PC-9 (cell line): ENCODE measurements at regions of chr1 and their contacts with region 1.

Region 1: GRCh38 chr1:55727010-55727409 is 511.8 kb upstream of the USP24 start:
- DNase-seq: peak; percentile 77 to 89
- H3K4me3 ChIP-seq: no peak overlapping the region
- H3K27ac ChIP-seq: peak overlapping the region; percentile 70
- H3K4me1 ChIP-seq: peaks cover 37% of the 10 kb centered on the region
- H3K27me3 ChIP-seq: no peaks in the 10 kb centered on the region
- CTCF ChIP-seq: no peak

Region 2: GRCh38 chr1:55645270-55645669 is 81.7 kb before region 1 on chr1:
- CTCF ChIA-PET with region 1: no interaction called
- POLR2A ChIA-PET with region 1: interaction called, 10 read pairs
- intact Hi-C with region 1: no loop called
- DNase-seq: no peak
- H3K4me3 ChIP-seq: no peak overlapping the region
- H3K27ac ChIP-seq: no peak overlapping the region
- H3K4me1 ChIP-seq: no peaks in the 10 kb centered on the region
- H3K27me3 ChIP-seq: no peaks in the 10 kb centered on the region
- CTCF ChIP-seq: no peak

Region 3: DNA sequence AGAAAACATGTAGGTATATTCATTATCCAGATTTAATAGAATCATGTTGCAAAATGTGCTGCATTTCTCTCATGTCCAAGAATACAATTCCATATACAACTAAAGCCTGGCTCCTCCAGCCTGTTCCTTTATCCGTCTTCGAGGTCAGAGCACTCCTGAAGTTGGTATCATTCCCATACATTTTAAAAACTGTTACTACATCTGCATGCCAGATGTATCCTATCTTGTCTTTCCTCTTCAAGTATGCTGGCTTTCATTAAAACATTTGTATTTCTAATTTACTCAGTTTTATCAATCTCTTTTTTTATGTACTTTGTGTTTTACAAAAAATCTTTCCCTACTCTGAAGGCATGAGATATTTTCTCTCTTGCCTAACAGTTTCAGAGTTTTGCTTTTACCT is 24.8 kb after region 1 on chr1:
- CTCF ChIA-PET with region 1: no interaction called
- POLR2A ChIA-PET with region 1: no interaction called
- intact Hi-C with region 1: no loop called
- DNase-seq: no peak
- H3K4me3 ChIP-seq: no peak overlapping the region
- H3K27ac ChIP-seq: no peak overlapping the region
- H3K4me1 ChIP-seq: no peaks in the 10 kb centered on the region
- H3K27me3 ChIP-seq: no peaks in the 10 kb centered on the region
- CTCF ChIP-seq: no peak

Region 4: GRCh38 chr1:55781944-55782482 is 55.0 kb after region 1 on chr1:
- CTCF ChIA-PET with region 1: no interaction called
- POLR2A ChIA-PET with region 1: no interaction called
- intact Hi-C with region 1: loop called (anchors 2 kb)
- DNase-seq: peak in 1 of 2 experiments; percentile 77
- H3K4me3 ChIP-seq: no peak overlapping the region
- H3K27ac ChIP-seq: no peak overlapping the region
- H3K4me1 ChIP-seq: peaks cover 47% of the 10 kb centered on the region
- H3K27me3 ChIP-seq: no peaks in the 10 kb centered on the region
- CTCF ChIP-seq: no peak

Region 5: DNA sequence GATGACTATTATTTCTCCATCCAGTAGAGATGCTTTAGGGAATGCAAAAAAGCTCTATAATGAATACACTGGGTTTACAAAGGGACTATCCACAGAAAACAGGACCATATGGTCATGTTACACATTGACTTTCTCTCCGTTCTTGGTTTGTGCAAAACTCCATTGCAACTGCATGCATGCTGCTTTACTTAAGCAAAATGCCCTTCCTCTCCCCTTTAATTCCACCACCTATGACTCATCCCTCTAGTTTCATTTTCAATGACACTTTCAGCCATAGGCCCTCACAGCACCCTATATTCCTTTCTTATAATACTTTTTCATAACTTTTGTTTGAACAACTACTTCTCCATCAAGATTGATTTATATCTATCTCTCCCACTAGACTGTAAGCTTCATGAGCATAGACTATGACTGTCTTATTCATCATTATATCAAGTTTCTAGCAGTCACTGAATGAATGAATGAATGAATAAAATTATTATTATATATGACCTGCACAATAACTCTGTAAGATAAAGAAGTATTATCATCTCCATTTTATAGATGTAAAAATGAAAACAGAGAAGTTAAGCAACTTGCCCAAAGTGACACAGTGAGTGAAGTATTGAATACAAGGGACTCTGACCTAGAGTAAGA is 603.5 kb after region 1 on chr1:
- CTCF ChIA-PET with region 1: no interaction called
- POLR2A ChIA-PET with region 1: no interaction called
- intact Hi-C with region 1: loop called (anchors 2 kb)
- DNase-seq: peak in 1 of 2 experiments; percentile 46
- H3K4me3 ChIP-seq: no peak overlapping the region
- H3K27ac ChIP-seq: peak overlapping the region; percentile 55
- H3K4me1 ChIP-seq: peaks cover 46% of the 10 kb centered on the region
- H3K27me3 ChIP-seq: no peaks in the 10 kb centered on the region
- CTCF ChIP-seq: no peak

Region 6: DNA sequence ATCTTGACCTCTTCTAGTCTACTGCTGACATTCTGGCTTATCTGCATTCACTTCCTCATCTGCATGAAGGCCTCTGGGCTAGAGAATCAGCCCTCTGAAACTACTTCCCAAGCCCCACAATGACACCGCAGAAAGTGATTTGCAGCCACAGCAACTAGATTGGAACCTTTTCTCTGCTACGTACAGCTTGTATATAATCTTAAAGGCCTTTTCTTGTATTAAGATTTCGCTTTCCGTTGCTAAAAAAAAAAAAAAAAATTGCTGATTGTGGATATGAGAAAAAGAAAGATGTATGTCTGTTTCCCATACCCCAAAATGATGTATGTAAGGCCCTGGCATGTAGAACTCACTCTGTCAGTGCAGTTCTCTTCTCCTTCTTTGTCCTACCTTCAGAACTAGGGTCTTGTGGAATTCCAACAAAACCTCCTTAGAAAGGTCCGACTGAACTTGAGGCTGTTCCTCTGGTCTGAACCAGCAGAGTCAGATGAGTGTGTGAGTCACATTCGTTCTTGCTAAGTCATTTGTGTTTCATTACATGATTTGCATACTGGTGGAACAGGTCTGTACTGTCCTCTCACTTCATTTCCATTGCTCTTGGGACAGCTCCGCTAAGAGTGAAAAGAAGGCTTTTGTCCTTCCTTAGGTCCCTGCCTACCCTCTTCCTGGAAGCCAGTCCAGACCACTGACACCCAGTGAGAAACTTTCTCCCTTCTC is 789.7 kb after region 1 on chr1:
- CTCF ChIA-PET with region 1: no interaction called
- POLR2A ChIA-PET with region 1: no interaction called
- intact Hi-C with region 1: loop called (anchors 1 kb)
- DNase-seq: peak; percentile 59 to 96
- H3K4me3 ChIP-seq: peak overlapping the region; percentile 60
- H3K27ac ChIP-seq: peak overlapping the region; percentile 99
- H3K4me1 ChIP-seq: peaks cover 41% of the 10 kb centered on the region
- H3K27me3 ChIP-seq: no peaks in the 10 kb centered on the region
- CTCF ChIP-seq: no peak